Psoas muscle (tissue), 8 donors: ENCODE measurements at regions of chr5 and their contacts with region 1.

Region 1: GRCh38 chr5:174571662-174572397 is 152.6 kb upstream of the MSX2 start:
- DNase-seq: peak in 1 of 2 donors; percentile 33
- ATAC-seq: peak; percentile 77 to 86 (median 82)
- H3K4me3 ChIP-seq: no peak overlapping the region
- H3K27ac ChIP-seq: no peak overlapping the region
- H3K4me1 ChIP-seq: peaks cover 9% of the 10 kb centered on the region
- H3K27me3 ChIP-seq: no peaks in the 10 kb centered on the region
- CTCF ChIP-seq: no peak

Region 2: GRCh38 chr5:174273325-174273724 is 298.5 kb before region 1 on chr5:
- intact Hi-C with region 1: no loop called
- DNase-seq: no peak
- ATAC-seq: no peak
- H3K4me3 ChIP-seq: no peak overlapping the region
- H3K27ac ChIP-seq: no peak overlapping the region
- H3K4me1 ChIP-seq: no peaks in the 10 kb centered on the region
- H3K27me3 ChIP-seq: no peaks in the 10 kb centered on the region
- CTCF ChIP-seq: no peak

Region 3: GRCh38 chr5:174424219-174425053 is 147.4 kb before region 1 on chr5:
- intact Hi-C with region 1: loop called in 1 of 2 experiments (anchors 5 kb)
- DNase-seq: no peak
- ATAC-seq: peak; percentile 49 to 71 (median 60)
- H3K4me3 ChIP-seq: no peak overlapping the region
- H3K27ac ChIP-seq: no peak overlapping the region
- H3K4me1 ChIP-seq: peaks cover 11% of the 10 kb centered on the region
- H3K27me3 ChIP-seq: peaks cover 0 to under 1% (median 0%) of the 10 kb centered on the region in 3 donors
- CTCF ChIP-seq: no peak

Region 4: GRCh38 chr5:174608631-174609097 is 36.8 kb after region 1 on chr5:
- intact Hi-C with region 1: no loop called
- DNase-seq: peak in 1 of 2 donors; percentile 61
- ATAC-seq: peak in 2 of 4 donors; percentile 36 to 39
- H3K4me3 ChIP-seq: no peak overlapping the region
- H3K27ac ChIP-seq: no peak overlapping the region
- H3K4me1 ChIP-seq: no peaks in the 10 kb centered on the region
- H3K27me3 ChIP-seq: peaks cover 0 to 13% (median 0%) of the 10 kb centered on the region in 3 donors
- CTCF ChIP-seq: no peak

Region 5: GRCh38 chr5:174724491-174725260 is 152.8 kb after region 1 on chr5 and contains the start of gene MSX2:
- intact Hi-C with region 1: loop called in 1 of 2 experiments (anchors 10 kb)
- DNase-seq: peak; percentile 89 to 93
- ATAC-seq: peak; percentile 98 to 99 (median 99)
- H3K4me3 ChIP-seq: peak within 1 kb of the TSS; percentile 87
- H3K27ac ChIP-seq: peak within 1 kb of the TSS; percentile 79
- H3K4me1 ChIP-seq: peaks cover 3% of the 10 kb centered on the region
- H3K27me3 ChIP-seq: peaks cover 2 to 65% (median 29%) of the 10 kb centered on the region in 3 donors
- CTCF ChIP-seq: no peak
- total RNA-seq, gene MSX2: 1.6 to 3.6 (median 2.0) TPM